ENCODE measurements at regions of chr2 and their contacts with region 1.

Region 1: DNA sequence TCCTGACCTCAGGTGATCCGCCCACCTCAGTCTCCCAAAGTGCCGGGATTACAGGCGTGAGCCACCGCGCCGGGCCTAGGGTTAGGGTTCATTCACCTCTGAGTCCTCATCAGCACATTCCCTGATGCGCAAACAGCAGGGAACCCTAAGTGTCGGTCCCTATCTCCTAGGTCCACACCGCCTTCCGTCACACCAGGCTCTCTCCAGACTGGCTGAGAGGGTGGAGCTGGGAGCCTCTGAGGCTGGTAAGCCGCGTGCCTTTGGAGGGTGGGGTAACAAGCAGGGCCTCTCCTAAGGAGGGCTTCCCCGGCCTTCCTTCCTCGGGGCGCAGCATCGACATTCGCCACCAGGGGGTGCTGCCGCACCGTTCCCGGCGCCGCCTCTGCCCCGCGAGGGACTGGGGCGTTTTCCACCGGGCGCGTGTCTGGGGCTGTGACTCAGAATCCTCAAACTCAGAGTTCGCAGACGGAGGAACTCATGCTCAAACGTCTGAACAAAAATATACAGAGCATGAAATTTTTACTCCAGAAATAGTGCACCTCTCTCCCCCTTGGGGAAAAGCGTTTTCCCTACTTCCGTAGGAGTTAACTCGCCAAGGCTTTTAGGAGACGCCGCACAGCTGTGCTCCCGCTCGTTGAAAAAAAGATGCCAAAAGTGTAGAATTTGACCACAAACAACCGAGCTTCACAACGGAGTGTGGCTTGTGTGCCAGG is 63.9 kb upstream of the ASAP2 start:
- DNase-seq: peak; percentile 94
- ATAC-seq: peak; percentile 93

Region 2: DNA sequence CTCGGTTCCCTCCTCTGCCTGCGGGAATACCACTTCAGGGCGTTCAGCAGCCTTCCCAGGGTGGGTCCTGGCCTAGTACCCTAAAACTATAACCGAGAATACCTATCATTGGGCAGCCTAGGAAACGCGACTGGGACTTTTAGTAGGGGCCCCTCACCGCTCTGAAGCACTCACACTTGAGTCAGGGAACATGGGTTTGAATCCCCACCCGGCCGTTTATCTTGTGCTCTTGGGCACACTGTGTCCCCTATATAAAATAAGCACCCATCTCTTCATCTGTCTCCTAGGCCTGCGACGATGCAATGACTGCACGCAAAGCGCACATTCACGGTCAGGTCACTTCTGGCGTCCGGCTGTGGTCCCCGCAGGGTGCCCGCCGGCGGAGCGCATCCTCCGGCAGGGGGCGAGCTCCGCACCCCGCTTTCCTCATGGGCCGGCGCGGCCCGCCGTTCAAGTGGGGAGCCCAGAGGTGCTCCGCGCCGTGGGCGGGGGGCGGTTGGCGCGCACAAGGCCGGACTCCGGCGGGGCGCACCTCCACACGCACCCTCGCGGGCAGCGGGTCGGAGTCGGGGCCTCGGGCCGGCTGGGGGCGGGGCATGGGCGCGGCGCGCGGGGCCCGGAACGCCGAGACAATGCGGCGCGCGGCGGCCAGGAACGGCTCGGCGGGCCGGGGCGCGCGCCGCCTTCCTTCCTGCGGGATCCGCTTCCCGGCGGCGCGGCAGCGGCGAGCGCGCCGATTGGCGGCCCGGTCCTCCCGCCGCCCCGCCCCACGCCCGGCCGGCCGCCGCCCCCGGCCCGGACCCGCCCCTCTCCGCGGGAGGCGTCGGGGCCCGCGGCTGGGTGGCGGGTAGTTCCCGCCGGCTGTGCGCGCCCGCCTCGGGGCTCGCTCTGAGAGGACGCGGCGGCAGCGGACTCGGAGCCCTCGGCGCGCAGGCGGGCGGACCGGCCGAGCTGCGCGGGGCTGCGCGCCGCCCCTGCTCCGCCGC is 63.5 kb after region 1 on chr2 and contains the start of gene ASAP2:
- intact Hi-C with region 1: loop called (anchors 10 kb)
- DNase-seq: peak; percentile 87
- ATAC-seq: peak; percentile 85
- total RNA-seq, gene ASAP2: 47.1 TPM

Region 3: GRCh38 chr2:9356292-9356691 is 213.6 kb after region 1 on chr2:
- intact Hi-C with region 1: loop called (anchors 10 kb)
- DNase-seq: no peak
- ATAC-seq: no peak